Cardiac septum (tissue), 1 donor: ENCODE measurements at regions of chr12 and their contacts with region 1.

Region 1: GRCh38 chr12:48851883-48852733 is at the start of gene DDX23:
- DNase-seq: peak; percentile 97
- total RNA-seq, gene DDX23: 33.3 TPM

Region 2: DNA sequence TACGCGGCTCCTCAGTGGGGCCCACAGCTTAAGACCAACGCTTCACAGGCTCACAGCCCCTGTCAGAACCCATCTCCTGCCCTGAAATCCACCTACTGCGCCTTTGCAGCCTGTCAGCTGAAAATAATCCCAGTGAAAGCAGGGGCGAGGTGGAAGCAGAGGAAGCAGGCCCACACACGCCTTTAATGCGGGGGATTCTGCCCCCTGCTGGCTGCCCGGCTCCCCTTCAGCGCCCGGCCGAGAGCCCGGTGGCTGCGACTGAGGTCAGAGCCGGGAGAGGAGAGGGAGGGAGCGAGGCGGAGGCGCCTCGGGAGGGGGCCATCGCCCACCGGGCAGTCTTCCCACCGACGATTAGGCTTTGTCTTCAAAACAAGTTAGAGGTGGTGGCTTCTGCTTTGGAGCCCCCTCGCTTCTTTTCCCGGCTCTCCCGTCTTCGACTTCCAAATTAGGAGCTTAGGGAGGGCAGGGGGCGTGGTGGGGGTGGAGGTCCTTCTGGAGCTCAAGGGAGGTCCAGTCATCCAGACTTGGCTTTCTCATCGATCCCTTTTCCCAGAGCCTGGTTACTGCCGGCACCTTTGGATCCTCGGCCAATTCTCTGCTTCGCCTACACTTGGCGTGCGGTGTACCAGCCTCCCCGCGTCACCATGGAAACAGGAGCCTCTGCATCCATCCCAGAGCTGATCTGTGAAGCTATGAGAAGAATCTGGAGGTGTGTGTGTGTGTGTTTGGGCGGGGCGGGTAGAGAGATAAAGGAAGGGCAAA is 38.7 kb after region 1 on chr12:
- intact Hi-C with region 1: loop called (anchors 1 kb)
- DNase-seq: peak; percentile 85

Region 3: GRCh38 chr12:48936379-48936979 is 84.4 kb after region 1 on chr12:
- intact Hi-C with region 1: loop called (anchors 5 kb)
- DNase-seq: peak; percentile 79

Region 4: GRCh38 chr12:48995061-48995879 is 143.2 kb after region 1 on chr12:
- intact Hi-C with region 1: loop called (anchors 5 kb)
- DNase-seq: peak; percentile 90